GM13976 (cell line): ENCODE measurements at regions of chr12 and their contacts with region 1.

Region 1: DNA sequence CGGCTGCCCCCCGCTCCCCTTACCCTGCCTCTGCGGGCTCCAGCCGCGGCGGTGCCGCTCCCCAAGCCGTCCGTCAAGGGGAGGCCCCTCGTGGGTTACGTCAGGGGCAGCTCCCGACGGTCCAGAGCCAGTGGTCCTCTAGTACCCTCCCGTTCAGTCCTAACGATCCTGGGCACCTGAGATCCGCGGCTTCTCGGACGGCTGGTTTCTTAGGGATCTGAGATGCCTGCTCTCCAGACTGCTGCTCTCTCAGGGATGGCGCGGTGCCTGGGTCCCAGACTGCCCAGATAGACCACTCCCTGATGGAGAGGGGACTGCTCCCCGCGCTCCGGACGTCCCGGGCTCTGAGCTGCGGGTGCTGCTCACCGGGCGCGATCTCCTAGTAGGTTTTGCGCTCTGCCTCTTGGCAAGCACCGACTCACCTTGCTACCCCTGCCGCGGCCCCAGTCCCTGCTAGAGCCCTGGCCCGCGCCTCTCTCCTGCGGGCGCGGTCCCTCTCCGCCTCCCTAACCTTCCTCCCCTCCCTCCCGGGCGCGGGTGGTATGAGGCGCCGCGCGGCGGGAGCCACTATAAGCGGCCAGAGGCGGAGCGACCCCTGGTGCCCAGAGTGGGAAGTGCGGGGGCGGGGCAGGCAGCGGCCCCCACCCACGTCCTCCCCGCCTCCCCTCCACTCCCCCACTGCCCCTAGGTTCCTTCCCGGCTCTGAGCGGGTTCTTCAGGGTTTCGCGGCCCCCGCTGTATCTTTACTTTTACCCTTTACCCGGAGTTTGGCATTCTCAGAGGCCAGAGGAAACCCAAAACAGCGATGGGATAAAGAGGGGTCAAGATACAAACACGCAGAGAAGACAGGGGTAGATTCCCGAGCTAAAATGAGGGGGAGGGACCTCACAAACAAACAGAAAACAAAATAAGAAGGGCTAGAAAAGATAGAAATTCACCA is at the start of gene C1QL4:
- DNase-seq: peak; percentile 91
- CTCF ChIP-seq: peak; percentile 89

Region 2: DNA sequence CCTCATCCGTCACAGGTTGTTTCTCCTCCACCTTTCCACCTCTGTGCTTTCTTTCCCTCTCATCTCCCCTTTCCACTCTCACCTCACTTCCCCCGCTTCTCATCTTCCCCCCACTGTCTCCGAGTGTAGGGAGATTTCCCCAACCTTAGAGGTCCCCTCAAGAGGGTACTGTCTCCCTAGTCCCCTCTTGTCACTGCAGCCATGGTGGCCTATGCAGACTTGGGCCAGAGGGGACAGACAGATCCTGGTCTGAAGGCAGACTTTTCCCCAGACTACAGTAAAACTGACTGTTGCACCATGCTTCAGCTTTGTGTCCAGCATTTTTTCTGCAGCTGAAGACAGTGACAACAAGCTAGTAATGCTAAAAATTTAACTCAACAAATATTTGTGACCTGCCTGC is 696.1 kb before region 1 on chr12:
- in situ Hi-C with region 1: no loop called
- DNase-seq: no peak
- CTCF ChIP-seq: no peak

Region 3: GRCh38 chr12:49288412-49288853 is 48.5 kb before region 1 on chr12:
- in situ Hi-C with region 1: loop called (anchors 5 kb)
- DNase-seq: peak; percentile 83
- CTCF ChIP-seq: peak; percentile 87